GM10248 (cell line): ENCODE measurements at regions of chr19 and their contacts with region 1.

Region 1: GRCh38 chr19:41310033-41310758 is at the start of gene CCDC97:
- DNase-seq: peak; percentile 93
- CTCF ChIP-seq: no peak

Region 2: DNA sequence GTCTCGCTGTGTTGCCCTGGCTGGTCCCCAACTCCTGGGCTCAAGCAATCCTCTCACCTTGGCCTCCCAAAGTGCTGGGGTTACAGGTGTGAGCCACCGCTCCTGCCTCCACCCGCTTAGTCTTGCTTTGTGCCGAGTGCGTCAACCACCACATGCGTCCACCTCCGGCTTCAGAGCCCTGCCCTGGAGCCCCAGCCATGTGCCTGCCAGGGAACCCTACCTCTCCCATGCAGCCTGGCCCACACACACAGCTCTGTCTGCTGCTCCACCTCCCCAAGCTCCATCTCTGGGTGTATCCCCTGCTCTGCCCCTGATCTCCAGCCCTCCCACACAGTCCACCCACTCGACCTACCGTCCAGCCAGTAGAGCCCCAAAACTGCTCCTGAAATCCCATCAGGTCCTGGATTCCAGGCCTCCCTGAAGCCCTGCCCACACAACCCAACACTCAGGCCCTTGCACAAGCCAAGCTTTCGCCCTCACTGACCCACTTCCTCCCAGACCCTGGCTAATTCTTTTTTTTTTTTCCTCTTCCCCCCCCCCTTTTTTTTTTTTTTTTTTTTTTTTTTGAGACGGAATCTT is 186.4 kb before region 1 on chr19:
- CTCF ChIA-PET with region 1: interaction called, 15 read pairs
- POLR2A ChIA-PET with region 1: no interaction called
- DNase-seq: no peak
- CTCF ChIP-seq: no peak

Region 3: DNA sequence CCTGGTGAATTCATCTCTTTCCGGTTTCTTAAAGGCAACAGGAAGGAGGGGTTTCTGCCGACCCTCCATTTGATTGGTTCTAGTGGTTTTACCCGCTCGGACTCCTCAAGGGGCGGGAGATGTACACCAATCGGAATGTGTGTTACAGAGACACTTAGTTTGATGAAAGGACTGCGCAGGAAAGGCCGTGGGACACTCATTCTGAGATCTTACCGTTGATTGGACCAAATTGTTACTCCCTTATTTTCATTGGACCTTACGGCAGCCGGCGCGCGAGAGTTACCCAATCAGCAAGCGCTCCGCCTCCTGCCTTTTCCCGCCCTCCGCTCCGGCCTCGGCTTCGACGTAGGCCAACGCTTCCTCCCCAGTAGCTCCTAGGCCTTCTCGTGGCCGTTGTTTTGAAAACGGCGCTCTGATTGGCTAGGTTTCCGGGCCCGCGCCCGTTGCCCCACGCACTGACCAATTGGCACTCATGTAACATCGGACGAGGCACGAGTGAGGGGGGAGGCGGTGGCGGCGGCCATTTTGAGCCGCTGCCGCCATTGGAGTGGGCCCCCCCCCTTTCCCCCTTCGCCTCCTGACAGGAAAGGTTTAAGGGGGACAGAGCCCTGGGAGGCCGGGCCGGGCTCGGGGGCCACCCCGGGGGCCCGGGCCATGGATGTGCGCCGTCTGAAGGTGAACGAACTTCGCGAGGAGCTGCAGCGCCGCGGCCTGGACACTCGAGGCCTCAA is 46.2 kb before region 1 on chr19 and contains the start of gene HNRNPUL1:
- CTCF ChIA-PET with region 1: interaction called, 20 read pairs
- POLR2A ChIA-PET with region 1: interaction called, 7 read pairs
- DNase-seq: peak; percentile 99
- CTCF ChIP-seq: peak; percentile 23

Region 4: GRCh38 chr19:41298348-41298964 is 11.7 kb before region 1 on chr19:
- CTCF ChIA-PET with region 1: interaction called, 124 read pairs
- POLR2A ChIA-PET with region 1: interaction called, 4 read pairs
- DNase-seq: no peak
- CTCF ChIP-seq: no peak

Region 5: GRCh38 chr19:41353466-41354342 is 43.5 kb after region 1 on chr19 and contains the start of gene TGFB1:
- CTCF ChIA-PET with region 1: interaction called, 25 read pairs
- POLR2A ChIA-PET with region 1: interaction called, 3 read pairs
- DNase-seq: peak; percentile 97
- CTCF ChIP-seq: peak; percentile 90